ENCODE measurements at regions of chr15 and their contacts with region 1.

Region 1: GRCh38 chr15:42548253-42549031 is at the starts of genes HAUS2 and LRRC57:
- DNase-seq: peak; percentile 90
- H3K4me3 Mint-ChIP-seq: peak within 1 kb of the TSS; percentile 95
- H3K27ac Mint-ChIP-seq: peak within 1 kb of the TSS; percentile 89
- H3K4me1 Mint-ChIP-seq: peaks cover 41% of the 10 kb centered on the region
- H3K27me3 Mint-ChIP-seq: no peaks in the 10 kb centered on the region
- total RNA-seq, gene HAUS2: 46.2 to 55.6 TPM
- total RNA-seq, gene LRRC57: 14.7 to 16.3 TPM

Region 2: GRCh38 chr15:42474827-42475226 is 73.6 kb before region 1 on chr15:
- CTCF ChIA-PET with region 1: no interaction called
- intact Hi-C with region 1: no loop called
- DNase-seq: no peak
- H3K4me3 Mint-ChIP-seq: no peak overlapping the region
- H3K27ac Mint-ChIP-seq: no peak overlapping the region
- H3K4me1 Mint-ChIP-seq: peaks cover 7% of the 10 kb centered on the region
- H3K27me3 Mint-ChIP-seq: no peaks in the 10 kb centered on the region

Region 3: DNA sequence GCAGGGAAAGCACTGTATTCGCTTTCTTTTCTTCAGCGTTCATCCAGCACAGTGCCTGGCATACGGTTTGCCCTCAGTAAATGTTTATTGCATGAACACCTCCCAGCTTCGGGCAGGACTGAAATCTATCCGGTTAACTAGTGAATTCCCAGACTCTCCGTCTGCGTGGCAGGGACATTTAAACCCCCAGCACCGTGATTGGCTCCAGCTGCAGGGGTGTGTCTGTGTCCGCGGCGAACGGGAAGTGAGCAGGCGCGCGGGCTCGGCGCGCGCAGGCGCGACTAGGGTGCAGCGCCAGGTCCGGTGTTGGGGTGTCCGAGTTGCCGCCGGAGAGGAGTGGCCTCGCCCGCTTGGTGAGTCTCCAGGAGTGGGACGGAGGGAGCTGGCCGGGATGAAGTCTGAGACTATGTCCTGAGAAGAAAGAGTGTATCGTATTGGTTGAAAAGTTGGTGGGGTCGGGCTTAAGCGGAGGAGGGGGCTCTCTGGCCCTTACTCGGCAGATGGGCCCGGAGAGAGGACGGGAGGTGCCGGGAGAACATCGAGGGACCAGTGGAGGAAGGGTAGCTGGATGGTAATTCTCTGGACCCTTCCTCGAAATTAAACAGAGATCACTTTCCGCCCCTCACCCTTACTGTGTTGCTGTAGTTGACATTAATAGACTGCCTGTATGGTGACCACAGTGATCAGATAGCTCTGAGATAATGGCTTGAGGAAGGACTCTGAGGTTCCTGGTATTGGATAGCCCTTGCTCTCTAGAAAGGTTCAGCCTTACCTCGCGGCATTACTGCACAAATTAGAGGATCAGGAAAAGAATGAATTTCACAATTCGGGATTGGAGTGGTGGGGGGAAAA is 52.9 kb before region 1 on chr15 and contains the start of gene SNAP23:
- CTCF ChIA-PET with region 1: no interaction called
- intact Hi-C with region 1: loop called (anchors 1 kb)
- DNase-seq: peak; percentile 87
- H3K4me3 Mint-ChIP-seq: peak within 1 kb of the TSS; percentile 99
- H3K27ac Mint-ChIP-seq: peak within 1 kb of the TSS; percentile 94
- H3K4me1 Mint-ChIP-seq: peaks cover 65% of the 10 kb centered on the region
- H3K27me3 Mint-ChIP-seq: no peaks in the 10 kb centered on the region
- total RNA-seq, gene SNAP23: 33.1 to 34.5 TPM

Region 4: GRCh38 chr15:42581272-42581730 is 32.9 kb after region 1 on chr15:
- CTCF ChIA-PET with region 1: no interaction called
- intact Hi-C with region 1: loop called (anchors 1 kb)
- DNase-seq: peak; percentile 87
- H3K4me3 Mint-ChIP-seq: peak overlapping the region; percentile 77
- H3K27ac Mint-ChIP-seq: no peak overlapping the region
- H3K4me1 Mint-ChIP-seq: peaks cover 19% of the 10 kb centered on the region
- H3K27me3 Mint-ChIP-seq: peaks cover 27% of the 10 kb centered on the region